Sigmoid colon (tissue), 7 donors: ENCODE measurements at regions of chrX and their contacts with region 1.

Region 1: GRCh38 chrX:150568320-150569154 is at the start of gene MTM1:
- DNase-seq: peak; percentile 97
- H3K4me3 ChIP-seq: peak within 1 kb of the TSS; percentile 46 to 78 (median 74)
- H3K27ac ChIP-seq: peak within 1 kb of the TSS; percentile 85 to 91 (median 91)
- H3K4me1 ChIP-seq: peaks cover 0 to 19% (median 7%) of the 10 kb centered on the region in 4 donors
- H3K27me3 ChIP-seq: no peaks in the 10 kb centered on the region
- CTCF ChIP-seq: no peak
- EP300 ChIP-seq: peak in 1 of 4 donors; percentile 21
- POLR2A ChIP-seq: peak; percentile 28 to 58
- total RNA-seq, gene MTM1: 14.4 to 23.5 (median 17.5) TPM

Region 2: GRCh38 chrX:149950681-149951080 is 617.9 kb before region 1 on chrX:
- intact Hi-C with region 1: loop called (anchors 10 kb)
- DNase-seq: no peak
- H3K4me3 ChIP-seq: no peak overlapping the region
- H3K27ac ChIP-seq: peak overlapping the region in 2 of 4 donors; percentile 5 to 47
- H3K4me1 ChIP-seq: peaks cover 0 to 5% (median 2%) of the 10 kb centered on the region in 4 donors
- H3K27me3 ChIP-seq: no peaks in the 10 kb centered on the region
- CTCF ChIP-seq: peak in 3 of 4 experiments; percentile 5 to 38 (median 28)
- EP300 ChIP-seq: no peak
- POLR2A ChIP-seq: no peak

Region 3: DNA sequence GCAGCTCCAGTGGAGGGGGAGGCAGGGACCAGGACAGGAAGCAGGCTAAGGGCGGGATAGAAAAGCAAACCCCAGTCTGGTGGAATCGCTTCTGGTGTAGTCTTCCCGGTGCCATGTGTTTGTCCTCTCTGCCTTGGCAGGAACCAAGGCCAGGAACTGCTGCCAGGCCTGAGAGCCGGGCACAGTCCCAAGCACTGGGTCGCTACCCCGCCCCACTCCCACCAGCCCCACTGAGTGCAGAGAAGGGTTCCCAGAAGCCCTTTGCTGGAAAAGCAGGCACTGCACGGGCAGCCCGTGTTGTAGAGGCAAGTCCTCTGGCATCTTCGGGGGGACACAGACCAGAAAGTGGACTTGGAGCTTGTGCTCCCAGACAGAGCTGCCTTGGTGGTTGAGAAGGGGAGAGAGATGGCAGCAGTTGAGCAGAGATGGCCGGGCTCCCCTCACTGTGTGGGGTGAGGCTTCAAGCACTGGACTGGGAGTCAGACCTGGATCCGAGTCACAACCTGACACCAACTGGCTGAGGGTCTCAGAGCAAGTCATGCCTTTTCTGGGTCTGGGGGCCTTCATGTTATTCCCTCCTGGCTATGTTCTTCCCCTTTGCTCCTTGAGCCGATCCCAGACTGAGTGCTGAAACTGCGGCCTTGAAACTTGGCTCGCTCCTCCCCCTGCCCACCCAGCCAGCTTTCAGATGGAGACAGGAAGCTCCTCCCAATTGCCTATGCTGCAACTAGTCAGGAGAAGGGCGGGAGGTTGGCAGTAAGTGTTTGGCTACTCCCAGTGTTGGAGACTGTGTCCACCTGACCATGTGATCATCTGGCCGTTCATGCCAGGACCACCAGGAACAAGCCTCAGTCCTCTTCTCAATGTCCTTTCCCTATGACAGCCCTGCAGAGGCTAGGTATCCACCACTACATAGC is 59.8 kb before region 1 on chrX:
- intact Hi-C with region 1: loop called (anchors 5 kb)
- DNase-seq: peak; percentile 87
- H3K4me3 ChIP-seq: peak overlapping the region in 2 of 4 donors; percentile 14 to 19
- H3K27ac ChIP-seq: peak overlapping the region; percentile 67 to 79 (median 72)
- H3K4me1 ChIP-seq: peaks cover 0 to 9% (median 8%) of the 10 kb centered on the region in 4 donors
- H3K27me3 ChIP-seq: no peaks in the 10 kb centered on the region
- CTCF ChIP-seq: no peak
- EP300 ChIP-seq: no peak
- POLR2A ChIP-seq: no peak

Region 4: GRCh38 chrX:150547375-150548115 is 21.0 kb before region 1 on chrX:
- intact Hi-C with region 1: loop called (anchors 2 kb)
- DNase-seq: peak; percentile 85
- H3K4me3 ChIP-seq: peak overlapping the region; percentile 23 to 47 (median 40)
- H3K27ac ChIP-seq: peak overlapping the region; percentile 76 to 84 (median 83)
- H3K4me1 ChIP-seq: peaks cover 0 to 19% (median 8%) of the 10 kb centered on the region in 4 donors
- H3K27me3 ChIP-seq: no peaks in the 10 kb centered on the region
- CTCF ChIP-seq: no peak
- EP300 ChIP-seq: no peak
- POLR2A ChIP-seq: no peak